AG04449 (cell line): ENCODE measurements at regions of chr14 and their contacts with region 1.

Region 1: DNA sequence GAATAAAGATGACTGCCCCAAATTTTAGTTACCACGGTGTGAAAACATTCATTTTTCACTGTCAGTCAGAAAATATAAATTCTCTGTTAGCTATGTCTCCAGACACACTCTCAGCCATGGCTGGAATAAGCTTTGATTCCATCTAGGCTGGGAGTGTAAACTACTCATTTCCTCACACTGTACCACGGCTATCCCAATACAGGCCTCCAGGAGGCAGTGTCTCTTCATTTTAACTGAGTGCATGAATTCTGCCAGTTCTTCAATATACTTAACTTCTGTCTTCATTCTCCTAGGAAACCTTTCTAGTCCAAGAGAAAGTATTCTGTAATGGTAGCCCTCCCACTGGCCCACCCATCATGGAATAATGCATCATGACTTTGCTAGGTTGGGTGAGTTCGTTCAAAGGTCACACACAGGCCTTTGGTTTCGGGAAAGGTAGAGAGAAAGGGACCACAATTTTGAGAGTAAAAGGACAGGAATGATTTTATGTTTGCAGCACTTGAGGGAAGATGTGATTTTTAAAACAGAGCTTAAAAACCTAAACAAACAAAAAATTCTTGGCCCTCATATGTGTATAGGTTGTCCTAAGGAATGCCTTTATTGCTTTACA is 381.1 kb downstream of the SEC23A start:
- DNase-seq: no peak
- H3K4me3 ChIP-seq: no peak overlapping the region
- CTCF ChIP-seq: peak; percentile 72

Region 2: GRCh38 chr14:38578278-38578681 is 143.6 kb before region 1 on chr14:
- CTCF ChIA-PET with region 1: no interaction called
- POLR2A ChIA-PET with region 1: no interaction called
- DNase-seq: peak; percentile 61
- H3K4me3 ChIP-seq: no peak overlapping the region
- CTCF ChIP-seq: no peak

Region 3: GRCh38 chr14:38737686-38738407 is 15.9 kb after region 1 on chr14:
- CTCF ChIA-PET with region 1: interaction called, 12 read pairs
- POLR2A ChIA-PET with region 1: no interaction called
- DNase-seq: no peak
- H3K4me3 ChIP-seq: no peak overlapping the region
- CTCF ChIP-seq: no peak

Region 4: DNA sequence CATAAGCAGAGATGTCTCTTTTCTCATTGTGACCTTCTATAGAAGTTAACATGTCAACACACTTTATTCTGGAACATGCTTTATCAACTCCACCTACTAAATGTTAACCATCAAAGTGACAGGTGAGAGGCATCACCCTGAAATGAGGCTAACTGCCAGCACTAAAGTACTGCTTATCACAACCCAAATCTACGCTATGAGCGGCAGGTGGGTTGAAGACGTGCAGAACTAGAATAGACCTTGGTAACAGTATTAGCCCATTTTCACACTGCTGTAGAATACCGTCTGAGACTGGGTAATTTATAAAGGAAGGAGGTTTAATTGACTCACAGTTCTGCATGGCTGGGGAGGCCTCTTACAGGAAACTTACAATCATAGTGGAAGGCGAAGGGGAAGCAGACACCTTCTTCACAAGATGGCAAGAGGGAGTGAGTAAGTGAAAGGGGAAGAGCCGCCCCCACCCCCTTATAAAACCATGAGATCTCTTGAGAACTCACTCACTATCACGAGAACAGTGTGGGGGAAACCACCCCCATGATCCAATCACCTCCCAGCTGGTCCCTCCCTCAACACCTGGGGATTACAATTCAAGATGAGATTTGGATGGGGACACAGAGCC is 22.1 kb after region 1 on chr14:
- CTCF ChIA-PET with region 1: interaction called, 15 read pairs
- POLR2A ChIA-PET with region 1: no interaction called
- DNase-seq: no peak
- H3K4me3 ChIP-seq: no peak overlapping the region
- CTCF ChIP-seq: no peak

Region 5: GRCh38 chr14:38762426-38762825 is 40.5 kb after region 1 on chr14:
- CTCF ChIA-PET with region 1: no interaction called
- POLR2A ChIA-PET with region 1: no interaction called
- DNase-seq: no peak
- H3K4me3 ChIP-seq: no peak overlapping the region
- CTCF ChIP-seq: no peak

Region 6: GRCh38 chr14:39034481-39035296 is 312.8 kb after region 1 on chr14:
- CTCF ChIA-PET with region 1: interaction called, 10 read pairs
- POLR2A ChIA-PET with region 1: no interaction called
- DNase-seq: no peak
- H3K4me3 ChIP-seq: no peak overlapping the region
- CTCF ChIP-seq: peak; percentile 18